Heart left ventricle (tissue), 16 donors: ENCODE measurements at regions of chr6 and their contacts with region 1.

Region 1: DNA sequence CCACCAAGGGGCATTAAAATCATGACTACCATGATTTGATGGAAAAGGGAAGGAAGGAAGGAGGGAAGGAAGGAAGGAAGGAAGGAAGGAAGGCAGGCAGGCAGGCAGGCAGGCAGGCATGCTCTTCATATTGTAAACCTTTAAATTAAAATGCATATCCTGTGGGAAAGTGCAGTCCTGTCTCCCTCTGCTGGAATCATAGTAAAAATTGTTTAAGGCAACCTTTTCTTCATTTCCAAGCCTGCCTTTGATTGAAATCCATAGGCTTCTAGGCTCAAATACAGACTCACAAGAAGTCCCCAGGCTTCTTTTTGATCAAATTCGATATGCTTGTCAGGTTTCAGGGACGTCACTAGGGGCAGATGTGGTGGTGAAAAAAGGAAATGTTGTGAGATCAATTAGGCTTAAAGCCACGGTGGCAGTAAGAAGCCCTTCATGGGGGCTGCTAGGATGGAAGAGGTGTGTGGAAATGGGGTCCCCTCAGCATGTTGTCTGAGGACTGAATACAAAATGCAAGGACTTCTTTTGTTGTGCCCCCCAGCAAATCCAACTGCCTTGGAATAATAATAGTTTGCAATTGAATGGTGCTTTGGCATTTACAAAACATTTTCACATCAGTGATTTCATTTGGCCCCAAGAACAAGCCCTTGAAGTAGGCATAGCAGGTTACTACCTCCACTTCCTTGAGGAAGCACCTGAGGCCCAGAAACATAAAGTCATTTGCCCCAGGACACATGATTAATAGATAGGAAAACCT is 25.6 kb upstream of the GABRR1 start:
- DNase-seq: no peak
- ATAC-seq: peak in 1 of 4 donors; percentile 49
- H3K4me3 ChIP-seq: no peak overlapping the region
- H3K27ac ChIP-seq: no peak overlapping the region
- H3K4me1 ChIP-seq: peaks cover 0 to 3% (median 0%) of the 10 kb centered on the region in 12 donors
- H3K27me3 ChIP-seq: no peaks in the 10 kb centered on the region
- CTCF ChIP-seq: peak in 11 of 12 donors; percentile 22 to 63 (median 54)
- POLR2A ChIP-seq: no peak

Region 2: GRCh38 chr6:89117211-89118108 is 125.3 kb before region 1 on chr6 and contains the start of gene SRSF12:
- intact Hi-C with region 1: loop called in 9 of 10 experiments (anchors 1 to 5 kb)
- DNase-seq: peak; percentile 20 to 74 (median 36)
- ATAC-seq: peak; percentile 38 to 92 (median 87)
- H3K4me3 ChIP-seq: peak within 1 kb of the TSS; percentile 63 to 89 (median 74)
- H3K27ac ChIP-seq: peak within 1 kb of the TSS in 4 of 12 donors; percentile 9 to 61 (median 29)
- H3K4me1 ChIP-seq: peaks cover 0 to 14% (median 6%) of the 10 kb centered on the region in 12 donors
- H3K27me3 ChIP-seq: no peaks in the 10 kb centered on the region
- CTCF ChIP-seq: no peak
- POLR2A ChIP-seq: no peak
- total RNA-seq, gene SRSF12: 0.14 to 0.48 (median 0.16) TPM in 5 of 9 donors, not detected in the others

Region 3: GRCh38 chr6:89122625-89123024 is 120.1 kb before region 1 on chr6:
- intact Hi-C with region 1: loop called (anchors 1 to 5 kb)
- DNase-seq: no peak
- ATAC-seq: peak; percentile 53 to 81 (median 60)
- H3K4me3 ChIP-seq: no peak overlapping the region
- H3K27ac ChIP-seq: no peak overlapping the region
- H3K4me1 ChIP-seq: peaks cover 0 to 5% (median 0%) of the 10 kb centered on the region in 12 donors
- H3K27me3 ChIP-seq: no peaks in the 10 kb centered on the region
- CTCF ChIP-seq: peak; percentile 22 to 65 (median 54)
- POLR2A ChIP-seq: no peak